Activated B cell treated with CpG ODN at 0.5 μM for 24 hours (primary cell): ENCODE measurements at regions of chr15 and their contacts with region 1.

Region 1: DNA sequence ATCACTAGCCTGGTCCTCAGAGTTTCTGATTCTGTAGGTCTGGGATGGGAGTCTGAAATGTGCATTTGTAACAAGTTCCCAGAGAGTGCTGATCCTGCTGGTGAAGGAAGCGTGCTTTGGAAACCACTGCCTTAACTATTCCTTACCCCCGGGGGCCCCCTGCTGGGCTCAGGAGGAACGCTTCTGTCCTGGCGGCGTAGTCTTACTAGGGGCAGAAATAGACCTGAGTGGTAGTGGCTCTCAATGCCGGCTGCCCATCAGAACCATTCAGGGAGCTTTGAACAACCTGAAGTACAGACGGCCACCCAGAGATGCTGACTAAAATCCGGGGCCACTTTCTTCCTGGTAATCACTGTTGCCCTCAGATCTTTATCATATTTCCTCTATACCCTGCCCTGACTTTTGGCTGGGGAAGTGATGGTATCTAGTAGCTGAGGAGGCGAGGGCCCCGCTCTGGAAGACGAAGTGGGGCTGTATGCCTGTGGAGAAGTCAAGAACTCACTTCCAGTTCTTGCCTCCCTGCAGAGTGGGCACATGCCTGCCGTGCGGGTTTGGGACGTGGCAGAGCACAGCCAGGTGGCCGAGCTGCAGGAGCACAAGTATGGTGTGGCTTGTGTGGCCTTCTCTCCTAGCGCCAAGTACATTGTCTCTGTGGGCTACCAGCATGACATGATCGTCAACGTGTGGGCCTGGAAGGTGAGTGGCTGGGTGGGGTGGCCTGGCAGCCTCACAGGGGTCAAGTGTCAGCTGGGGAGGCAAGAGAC is 16.3 kb upstream of the JMJD7 start:
- DNase-seq: peak; percentile 67
- ATAC-seq: peak; percentile 97
- H3K4me3 Mint-ChIP-seq: no peak overlapping the region
- H3K27ac Mint-ChIP-seq: no peak overlapping the region
- H3K4me1 Mint-ChIP-seq: peaks cover 11% of the 10 kb centered on the region
- H3K27me3 Mint-ChIP-seq: no peaks in the 10 kb centered on the region
- CTCF ChIP-seq: peak; percentile 85

Region 2: DNA sequence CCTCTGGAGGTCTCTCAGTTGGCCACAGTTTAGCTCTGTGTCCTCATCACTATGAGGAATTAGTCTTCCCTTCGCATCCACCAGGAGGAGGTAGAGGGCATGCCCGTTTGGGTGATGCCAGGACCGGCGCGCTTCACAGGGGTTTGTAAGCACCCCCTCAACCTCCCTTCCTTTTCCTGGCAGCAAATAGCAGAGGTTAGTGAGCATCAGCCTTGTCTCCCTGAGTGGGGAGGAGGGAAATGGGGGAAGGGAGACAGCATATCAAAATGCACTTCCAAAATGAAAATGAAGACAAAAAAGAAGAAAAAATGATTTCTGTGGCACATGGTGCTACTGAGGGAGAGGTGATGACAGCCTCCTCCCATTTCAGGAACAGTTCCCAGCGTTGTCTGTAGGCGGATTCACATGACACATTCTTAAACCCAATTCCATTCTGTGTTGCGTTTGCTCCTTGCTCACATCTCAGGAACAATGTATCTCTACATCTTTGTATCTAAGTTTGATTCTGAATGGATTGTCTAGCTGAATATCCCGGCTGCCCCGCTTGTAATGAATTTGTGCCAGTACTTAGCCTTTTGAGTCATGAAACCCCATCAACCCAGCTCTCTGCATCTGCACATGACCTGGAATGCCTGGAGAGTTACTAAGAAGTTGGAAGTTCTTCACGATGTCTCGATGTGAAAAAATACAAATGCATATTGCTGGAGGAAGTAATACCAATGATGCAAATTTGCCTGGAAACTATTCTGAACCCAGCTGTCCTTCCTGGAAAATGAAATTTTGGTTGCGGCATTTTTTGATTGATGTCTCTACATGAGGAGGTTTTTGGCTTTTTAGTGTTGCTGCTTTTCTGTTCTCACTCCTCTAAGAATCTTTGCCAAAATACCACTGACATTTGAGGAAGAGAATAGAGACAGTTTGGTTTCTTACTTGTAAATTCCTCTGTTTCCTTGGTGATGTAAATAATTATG is 207.4 kb before region 1 on chr15:
- CTCF ChIA-PET with region 1: interaction called, 34 read pairs
- POLR2A ChIA-PET with region 1: no interaction called
- intact Hi-C with region 1: loop called (anchors 1 kb)
- DNase-seq: peak; percentile 25
- ATAC-seq: peak; percentile 96
- H3K4me3 Mint-ChIP-seq: peak overlapping the region; percentile 64
- H3K27ac Mint-ChIP-seq: no peak overlapping the region
- H3K4me1 Mint-ChIP-seq: peaks cover 10% of the 10 kb centered on the region
- H3K27me3 Mint-ChIP-seq: peaks cover 26% of the 10 kb centered on the region
- CTCF ChIP-seq: peak; percentile 13

Region 3: DNA sequence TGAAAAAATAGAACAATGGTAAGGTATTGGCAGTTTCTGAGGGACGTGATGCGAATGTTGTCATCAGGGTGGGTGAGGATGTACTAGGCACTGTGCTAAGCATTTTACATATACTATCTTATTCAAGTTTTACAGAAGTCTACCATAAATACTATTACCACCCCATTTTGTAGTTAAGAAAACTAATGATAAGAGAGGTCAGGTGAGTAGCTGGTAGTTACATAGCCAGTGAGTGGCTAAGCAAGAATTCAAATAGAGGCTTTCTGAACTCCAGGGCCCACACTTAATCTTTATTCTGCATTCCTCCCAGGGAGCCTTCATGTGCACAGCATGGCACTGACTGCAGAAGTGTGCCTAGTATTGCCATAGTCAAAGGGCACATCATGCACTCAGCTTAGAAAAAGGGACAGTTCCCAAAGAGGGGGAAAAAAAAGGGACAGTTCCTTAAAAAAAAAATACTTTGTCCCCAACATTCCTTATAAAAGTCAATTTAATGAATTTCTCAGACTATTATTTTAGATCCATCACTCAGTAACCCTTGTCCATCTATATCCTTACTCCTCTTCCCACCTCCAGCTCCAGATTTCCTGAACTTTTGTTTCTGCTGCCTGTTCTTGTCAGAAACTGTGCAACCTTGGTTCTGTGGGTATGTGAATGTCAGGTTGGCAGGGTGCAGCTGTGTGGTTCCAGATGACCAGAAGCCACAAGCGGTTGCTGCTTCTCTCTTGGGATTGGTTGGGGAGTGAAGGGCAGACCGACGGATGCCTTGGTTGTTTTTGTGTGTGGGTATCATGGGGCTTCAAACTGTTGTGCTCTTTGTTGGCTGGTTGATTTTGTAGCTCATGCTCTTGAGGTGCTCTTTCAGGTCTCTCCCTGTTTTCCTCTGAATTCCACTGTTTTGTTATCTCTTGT is 29.0 kb before region 1 on chr15:
- CTCF ChIA-PET with region 1: interaction called, 309 read pairs
- POLR2A ChIA-PET with region 1: interaction called, 3 read pairs
- intact Hi-C with region 1: no loop called
- DNase-seq: peak; percentile 30
- ATAC-seq: peak; percentile 99
- H3K4me3 Mint-ChIP-seq: peak overlapping the region; percentile 59
- H3K27ac Mint-ChIP-seq: peak overlapping the region; percentile 62
- H3K4me1 Mint-ChIP-seq: peaks cover 54% of the 10 kb centered on the region
- H3K27me3 Mint-ChIP-seq: no peaks in the 10 kb centered on the region
- CTCF ChIP-seq: no peak

Region 4: DNA sequence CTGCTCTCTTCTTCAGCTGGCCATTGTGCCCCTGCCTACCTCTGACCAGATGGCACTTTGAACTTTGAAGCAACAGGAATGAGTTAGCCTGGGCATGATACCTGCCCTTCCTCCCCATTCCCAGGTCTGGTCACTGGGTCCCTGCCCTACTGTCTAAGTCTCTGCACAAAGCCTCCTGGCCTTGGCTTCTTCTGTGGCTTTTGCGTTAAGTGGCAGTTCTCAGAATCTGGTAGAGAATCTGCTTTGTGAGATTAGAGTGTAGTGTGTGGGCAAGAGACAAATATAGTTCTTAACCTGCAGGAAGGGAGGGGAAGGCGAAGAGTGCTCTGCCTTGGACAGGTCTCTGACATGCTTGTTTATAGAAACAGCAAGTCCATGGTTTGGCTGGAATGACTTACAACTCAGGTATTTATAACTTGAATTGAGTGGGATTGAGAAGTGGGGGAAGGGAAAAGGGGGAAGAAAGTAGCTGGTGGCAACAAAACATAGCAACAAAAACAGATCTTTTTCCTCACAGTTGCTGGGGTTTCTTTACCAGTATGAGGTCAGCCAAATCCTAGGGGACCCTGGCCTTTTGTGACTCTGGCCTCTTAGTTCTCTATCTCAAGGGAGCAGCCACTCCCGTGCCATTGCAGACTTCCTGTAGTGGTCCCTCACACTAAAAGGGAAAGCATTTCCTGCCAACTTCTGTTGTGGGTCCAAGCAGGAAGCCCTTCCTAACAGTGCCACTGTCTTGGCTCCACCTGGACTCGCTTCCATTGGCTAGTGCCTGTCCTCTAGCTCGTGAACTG is 20.7 kb before region 1 on chr15:
- CTCF ChIA-PET with region 1: interaction called, 18 read pairs
- POLR2A ChIA-PET with region 1: interaction called, 7 read pairs
- intact Hi-C with region 1: loop called (anchors 2 kb)
- DNase-seq: no peak
- ATAC-seq: no peak
- H3K4me3 Mint-ChIP-seq: no peak overlapping the region
- H3K27ac Mint-ChIP-seq: no peak overlapping the region
- H3K4me1 Mint-ChIP-seq: peaks cover 57% of the 10 kb centered on the region
- H3K27me3 Mint-ChIP-seq: no peaks in the 10 kb centered on the region
- CTCF ChIP-seq: no peak